AG04450 (cell line): ENCODE measurements at regions of chr15 and their contacts with region 1.

Region 1: DNA sequence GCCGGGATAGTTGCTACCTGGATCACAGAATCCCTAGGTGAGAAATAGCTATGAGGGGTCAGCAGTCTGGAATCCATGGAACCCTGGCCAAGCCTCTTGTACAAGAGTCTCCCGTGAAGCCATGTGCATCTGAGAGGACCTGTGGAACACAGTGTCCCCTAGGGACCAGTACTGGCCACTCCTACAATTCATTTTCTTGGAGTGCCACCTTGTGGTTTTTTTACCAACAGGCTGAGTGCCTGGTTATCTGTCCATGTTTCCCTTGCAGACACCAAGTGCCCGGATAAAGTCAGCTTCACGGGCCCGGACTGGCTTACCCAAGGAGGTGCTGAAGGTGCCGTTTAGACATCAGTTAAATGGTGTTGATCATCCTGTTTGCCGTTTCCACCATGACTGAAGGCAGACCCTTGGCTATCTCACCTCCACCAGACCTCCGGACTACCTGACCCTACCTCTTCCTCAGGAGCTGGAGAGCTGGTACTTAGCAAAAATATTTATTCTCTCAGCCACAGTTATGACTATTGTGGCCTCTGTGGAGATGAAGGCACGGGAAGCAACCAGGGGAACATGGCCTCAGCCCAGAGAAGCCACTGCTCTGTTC is 93.9 kb downstream of the RBPMS2 start:
- DNase-seq: no peak
- H3K4me3 ChIP-seq: no peak overlapping the region
- H3K27ac ChIP-seq: peak overlapping the region; percentile 12
- H3K27me3 ChIP-seq: no peaks in the 10 kb centered on the region
- CTCF ChIP-seq: peak; percentile 70

Region 2: GRCh38 chr15:64423970-64424369 is 257.6 kb before region 1 on chr15:
- CTCF ChIA-PET with region 1: interaction called, 19 read pairs
- POLR2A ChIA-PET with region 1: no interaction called
- DNase-seq: no peak
- H3K4me3 ChIP-seq: no peak overlapping the region
- H3K27ac ChIP-seq: no peak overlapping the region
- H3K27me3 ChIP-seq: no peaks in the 10 kb centered on the region
- CTCF ChIP-seq: no peak

Region 3: DNA sequence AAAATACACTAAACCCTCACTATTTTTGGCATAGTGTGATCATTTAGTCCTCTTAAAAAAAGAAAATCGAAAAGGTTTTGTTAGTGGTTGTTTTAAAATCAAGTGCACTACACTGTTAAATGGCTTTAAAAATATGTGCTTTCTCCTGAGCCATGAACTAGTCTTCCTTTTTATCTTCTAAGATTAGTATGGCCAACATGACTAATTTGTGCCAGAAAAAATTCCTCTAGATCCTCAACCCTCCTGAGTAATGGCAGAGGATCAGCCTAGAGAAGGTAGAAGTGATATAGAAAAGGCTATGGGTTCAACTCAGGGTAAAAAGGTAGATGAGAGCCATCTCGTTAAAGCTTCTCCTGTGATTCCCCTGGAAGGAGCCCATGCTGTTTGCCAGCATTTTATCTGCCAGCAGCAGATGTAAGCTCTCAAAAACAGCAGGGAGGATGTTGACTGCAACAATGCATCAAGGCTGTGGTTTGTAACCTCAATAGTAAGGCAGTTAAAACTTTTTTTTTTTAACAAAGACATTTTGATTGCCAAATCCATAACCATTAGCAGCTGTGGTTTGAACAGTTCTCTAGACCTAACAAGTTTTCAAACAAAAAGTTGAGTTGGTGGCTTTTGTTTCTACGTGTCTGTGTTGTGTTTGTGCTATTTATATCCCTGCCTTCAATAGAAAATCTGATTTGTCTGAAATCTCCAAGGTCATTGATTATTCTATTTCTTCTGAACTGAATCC is 251.4 kb before region 1 on chr15:
- CTCF ChIA-PET with region 1: interaction called, 19 read pairs
- POLR2A ChIA-PET with region 1: interaction called, 4 read pairs
- DNase-seq: peak; percentile 91
- H3K4me3 ChIP-seq: no peak overlapping the region
- H3K27ac ChIP-seq: peak overlapping the region; percentile 57
- H3K27me3 ChIP-seq: no peaks in the 10 kb centered on the region
- CTCF ChIP-seq: no peak

Region 4: DNA sequence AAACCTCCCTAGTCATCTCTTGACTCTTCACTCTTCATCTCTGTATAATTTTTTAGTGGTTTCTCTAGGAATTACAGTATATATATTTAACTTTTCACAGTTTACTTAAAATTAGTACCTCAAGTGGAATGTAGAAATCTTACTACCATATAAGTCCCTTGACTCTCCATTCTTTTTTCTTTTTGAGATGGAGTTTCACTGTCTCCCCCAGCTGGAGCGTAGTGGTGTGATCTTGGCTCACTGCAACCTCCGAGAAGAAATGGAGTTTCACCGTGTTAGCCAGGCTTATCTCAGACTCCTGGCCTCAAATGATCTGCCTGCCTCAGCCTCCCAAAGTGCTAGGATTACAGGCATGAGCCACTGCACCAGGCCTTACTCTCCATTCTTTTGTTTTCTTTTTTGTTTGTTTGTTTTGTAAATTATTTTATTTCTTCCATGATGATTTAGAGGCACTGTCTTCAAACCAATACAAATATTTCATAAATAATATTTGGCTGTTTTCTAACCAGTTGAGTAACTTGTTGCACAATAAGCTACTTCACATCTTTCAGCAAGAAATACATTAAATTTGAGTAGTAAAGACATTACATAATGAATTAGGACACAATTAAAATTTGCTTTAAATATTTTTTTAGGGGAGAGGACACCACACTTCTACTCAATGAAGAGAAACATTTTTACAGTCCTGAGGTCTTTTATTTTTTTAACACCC is 51.0 kb before region 1 on chr15:
- CTCF ChIA-PET with region 1: no interaction called
- POLR2A ChIA-PET with region 1: no interaction called
- DNase-seq: peak; percentile 29
- H3K4me3 ChIP-seq: no peak overlapping the region
- H3K27ac ChIP-seq: no peak overlapping the region
- H3K27me3 ChIP-seq: no peaks in the 10 kb centered on the region
- CTCF ChIP-seq: peak; percentile 26; the same call in 1 of the 2 replicates

Region 5: DNA sequence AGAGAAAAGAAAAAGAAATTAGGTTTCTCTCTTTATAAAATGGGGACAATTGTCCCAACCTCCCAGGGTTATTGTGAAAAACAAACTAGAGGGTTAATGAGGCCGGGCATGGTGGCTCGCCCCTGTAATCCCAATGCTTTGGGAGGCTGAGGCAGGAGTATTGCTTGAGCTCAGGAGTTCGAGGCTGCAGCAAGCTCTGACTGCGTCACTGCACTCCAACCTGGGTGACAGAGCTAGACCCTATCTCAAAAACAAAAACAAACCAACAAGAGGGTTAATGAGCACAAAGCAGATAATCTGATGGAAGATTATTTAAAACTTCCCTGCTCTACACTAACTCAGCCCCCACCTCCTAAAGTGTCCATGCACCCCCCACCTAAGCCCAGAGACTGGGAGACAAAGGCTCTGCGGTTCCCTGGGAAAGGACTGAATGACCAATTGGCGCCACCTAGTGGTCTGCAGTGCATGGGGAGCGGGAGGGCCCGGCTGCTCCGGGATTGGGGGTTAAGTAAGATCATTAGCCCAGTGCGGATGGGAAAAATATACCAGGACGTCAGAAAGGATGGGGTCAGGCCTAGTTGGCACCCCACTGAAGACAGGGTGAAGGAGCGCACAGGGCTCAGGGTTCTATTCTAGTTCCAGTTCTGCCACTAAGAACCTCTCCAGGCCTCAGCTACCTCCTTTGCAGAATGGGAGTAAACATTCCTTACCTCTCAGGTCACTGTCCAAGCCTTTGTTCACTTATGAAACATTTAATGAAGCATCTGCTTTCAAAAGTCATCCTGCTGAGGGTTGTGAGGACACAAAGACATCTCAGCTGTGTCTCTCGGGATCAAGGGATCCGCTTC is 128.3 kb after region 1 on chr15:
- CTCF ChIA-PET with region 1: interaction called, 15 read pairs
- POLR2A ChIA-PET with region 1: no interaction called
- DNase-seq: no peak
- H3K4me3 ChIP-seq: no peak overlapping the region
- H3K27ac ChIP-seq: no peak overlapping the region
- H3K27me3 ChIP-seq: peaks cover 7% of the 10 kb centered on the region
- CTCF ChIP-seq: peak; percentile 96